ENCODE measurements at regions of chr19 and their contacts with region 1.

Region 1: GRCh38 chr19:17346109-17346671 is 8.8 kb downstream of the GTPBP3 start:
- DNase-seq: peak; percentile 42
- ATAC-seq: peak; percentile 98
- H3K4me3 ChIP-seq: no peak overlapping the region
- H3K27ac ChIP-seq: no peak overlapping the region
- H3K4me1 ChIP-seq: 0 out of 2 replicates have a peak, but pooled peaks cover 2% of the 10 kb centered on the region
- H3K27me3 ChIP-seq: peaks cover 2% of the 10 kb centered on the region; the same call in 1 of the 2 replicates
- CTCF ChIP-seq: peak; percentile 90
- POLR2A ChIP-seq: no peak
- RAD21 ChIP-seq: peak; percentile 80

Region 2: GRCh38 chr19:17470068-17470841 is 124.1 kb after region 1 on chr19 and contains the start of gene SLC27A1:
- CTCF ChIA-PET with region 1: no interaction called
- POLR2A ChIA-PET with region 1: no interaction called
- dilution Hi-C with region 1: no loop called
- in situ Hi-C with region 1: no loop called
- intact Hi-C with region 1: loop called (anchors 1 kb)
- DNase-seq: peak; percentile 98
- ATAC-seq: peak; percentile 94
- H3K4me3 ChIP-seq: peak within 1 kb of the TSS; percentile 91
- H3K27ac ChIP-seq: peak within 1 kb of the TSS; percentile 73
- H3K4me1 ChIP-seq: peaks cover 12% of the 10 kb centered on the region
- H3K27me3 ChIP-seq: no peaks in the 10 kb centered on the region
- CTCF ChIP-seq: no peak
- POLR2A ChIP-seq: peak; percentile 58; the same call in 1 of the 2 replicates
- RAD21 ChIP-seq: no peak
- total RNA-seq, gene SLC27A1: 4.8 and 5.6 TPM in 2 replicates

Region 3: GRCh38 chr19:17511724-17512573 is 165.8 kb after region 1 on chr19:
- CTCF ChIA-PET with region 1: no interaction called
- POLR2A ChIA-PET with region 1: no interaction called
- dilution Hi-C with region 1: no loop called
- in situ Hi-C with region 1: no loop called
- intact Hi-C with region 1: no loop called
- DNase-seq: peak; percentile 75
- ATAC-seq: peak; percentile 59
- H3K4me3 ChIP-seq: peak overlapping the region; percentile 54
- H3K27ac ChIP-seq: peak overlapping the region; percentile 87
- H3K4me1 ChIP-seq: peaks cover 16% of the 10 kb centered on the region
- H3K27me3 ChIP-seq: no peaks in the 10 kb centered on the region
- CTCF ChIP-seq: no peak
- POLR2A ChIP-seq: no peak; the same call in 1 of the 2 replicates
- RAD21 ChIP-seq: no peak

Measured in IMR-90 (cell line).